ENCODE measurements at regions of chr17 and their contacts with region 1.

Region 1: GRCh38 chr17:72725433-72726068 is 366.9 kb downstream of the SLC39A11 start:
- DNase-seq: peak; percentile 85
- H3K4me3 Mint-ChIP-seq: peak overlapping the region; percentile 26
- H3K27ac Mint-ChIP-seq: peak overlapping the region; percentile 82
- H3K4me1 Mint-ChIP-seq: peaks cover 42% of the 10 kb centered on the region
- H3K27me3 Mint-ChIP-seq: no peaks in the 10 kb centered on the region

Region 2: GRCh38 chr17:72556944-72557826 is 168.4 kb before region 1 on chr17:
- intact Hi-C with region 1: loop called (anchors 1 kb)
- DNase-seq: peak; percentile 90
- H3K4me3 Mint-ChIP-seq: no peak overlapping the region
- H3K27ac Mint-ChIP-seq: no peak overlapping the region
- H3K4me1 Mint-ChIP-seq: no peaks in the 10 kb centered on the region
- H3K27me3 Mint-ChIP-seq: no peaks in the 10 kb centered on the region

Region 3: GRCh38 chr17:72699545-72699944 is 26.0 kb before region 1 on chr17:
- intact Hi-C with region 1: no loop called
- DNase-seq: no peak
- H3K4me3 Mint-ChIP-seq: no peak overlapping the region
- H3K27ac Mint-ChIP-seq: no peak overlapping the region
- H3K4me1 Mint-ChIP-seq: peaks cover 7% of the 10 kb centered on the region
- H3K27me3 Mint-ChIP-seq: no peaks in the 10 kb centered on the region

Region 4: GRCh38 chr17:72754513-72754912 is 29.0 kb after region 1 on chr17:
- intact Hi-C with region 1: no loop called
- DNase-seq: no peak
- H3K4me3 Mint-ChIP-seq: no peak overlapping the region
- H3K27ac Mint-ChIP-seq: no peak overlapping the region
- H3K4me1 Mint-ChIP-seq: peaks cover 3% of the 10 kb centered on the region
- H3K27me3 Mint-ChIP-seq: no peaks in the 10 kb centered on the region

Region 5: GRCh38 chr17:72863526-72864211 is 138.1 kb after region 1 on chr17:
- intact Hi-C with region 1: loop called (anchors 2 kb)
- DNase-seq: peak; percentile 55
- H3K4me3 Mint-ChIP-seq: peak overlapping the region; percentile 16
- H3K27ac Mint-ChIP-seq: peak overlapping the region; percentile 70
- H3K4me1 Mint-ChIP-seq: peaks cover 29% of the 10 kb centered on the region
- H3K27me3 Mint-ChIP-seq: no peaks in the 10 kb centered on the region

Region 6: DNA sequence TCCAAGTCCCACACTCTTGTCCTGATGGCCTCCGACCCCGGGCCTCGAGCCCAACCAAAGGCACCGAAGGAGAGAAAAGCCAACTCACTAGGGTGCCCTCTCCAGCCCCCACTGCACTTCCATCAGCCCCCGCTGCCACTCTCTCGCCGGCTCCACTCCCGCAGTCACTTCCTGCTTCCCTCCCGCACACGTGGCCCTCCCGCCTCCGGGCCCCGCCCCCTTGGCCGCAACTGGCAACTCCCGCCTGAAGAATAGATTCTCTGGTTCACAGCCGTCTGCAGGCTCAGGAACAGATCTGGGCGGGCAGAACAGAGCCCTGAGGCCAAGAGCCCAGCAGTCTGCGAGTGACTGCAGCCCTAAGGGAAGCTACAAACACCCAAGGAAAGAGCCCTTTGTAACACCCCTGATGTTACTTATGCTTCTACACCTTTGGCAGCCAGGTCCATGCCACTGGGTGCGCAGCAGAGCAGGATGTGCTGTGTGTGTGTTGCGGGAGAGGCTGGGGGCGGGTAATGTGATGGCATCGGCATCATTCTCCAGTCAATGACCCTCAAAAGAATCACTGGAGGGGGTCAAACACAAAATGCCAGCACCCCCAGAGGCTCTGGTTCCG is 367.1 kb after region 1 on chr17 and contains the start of gene SLC39A11:
- intact Hi-C with region 1: loop called (anchors 2 kb)
- DNase-seq: peak; percentile 97
- H3K4me3 Mint-ChIP-seq: peak within 1 kb of the TSS; percentile 100
- H3K27ac Mint-ChIP-seq: peak within 1 kb of the TSS; percentile 99
- H3K4me1 Mint-ChIP-seq: peaks cover 20% of the 10 kb centered on the region
- H3K27me3 Mint-ChIP-seq: peaks cover 13% of the 10 kb centered on the region
- total RNA-seq, gene SLC39A11: 24.6 and 26.1 TPM in 2 replicates

Region 7: DNA sequence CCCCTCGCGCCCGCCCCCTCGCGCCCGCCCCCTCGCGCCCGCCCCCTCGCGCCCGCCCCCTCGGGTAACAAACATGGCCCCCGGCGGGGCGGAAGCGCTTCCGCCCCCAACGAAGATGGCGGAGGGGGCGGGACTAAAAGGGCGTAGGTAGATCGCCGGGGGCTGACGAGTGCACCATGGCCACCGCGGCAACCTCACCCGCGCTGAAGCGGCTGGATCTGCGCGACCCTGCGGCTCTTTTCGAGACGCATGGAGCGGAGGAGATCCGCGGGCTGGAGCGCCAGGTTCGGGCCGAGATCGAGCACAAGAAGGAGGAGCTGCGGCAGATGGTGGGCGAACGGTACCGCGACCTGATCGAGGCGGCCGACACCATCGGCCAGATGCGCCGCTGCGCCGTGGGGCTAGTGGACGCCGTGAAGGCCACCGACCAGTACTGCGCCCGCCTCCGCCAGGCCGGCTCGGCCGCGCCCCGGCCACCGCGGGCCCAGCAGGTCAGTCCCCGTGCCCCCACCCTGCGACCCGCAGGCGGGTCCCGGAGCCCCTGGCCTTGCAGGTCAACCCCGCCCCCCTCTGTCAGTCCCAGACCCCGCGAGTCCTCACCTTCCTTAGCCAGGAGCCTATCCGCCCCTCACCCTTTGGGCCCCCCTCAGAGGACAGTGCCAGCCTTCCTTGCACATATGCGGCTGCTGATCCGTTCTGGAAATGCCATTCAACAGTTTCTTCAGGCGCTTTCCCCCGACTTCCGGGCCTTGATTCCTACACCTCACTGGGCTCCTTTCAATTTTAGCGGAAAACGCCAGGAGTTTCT is 467.5 kb after region 1 on chr17 and contains the start of gene COG1:
- intact Hi-C with region 1: loop called (anchors 1 kb)
- DNase-seq: peak; percentile 90
- H3K4me3 Mint-ChIP-seq: peak within 1 kb of the TSS; percentile 93
- H3K27ac Mint-ChIP-seq: peak within 1 kb of the TSS; percentile 97
- H3K4me1 Mint-ChIP-seq: peaks cover 18% of the 10 kb centered on the region
- H3K27me3 Mint-ChIP-seq: no peaks in the 10 kb centered on the region
- total RNA-seq, gene COG1: 30.0 and 32.7 TPM in 2 replicates

Region 8: DNA sequence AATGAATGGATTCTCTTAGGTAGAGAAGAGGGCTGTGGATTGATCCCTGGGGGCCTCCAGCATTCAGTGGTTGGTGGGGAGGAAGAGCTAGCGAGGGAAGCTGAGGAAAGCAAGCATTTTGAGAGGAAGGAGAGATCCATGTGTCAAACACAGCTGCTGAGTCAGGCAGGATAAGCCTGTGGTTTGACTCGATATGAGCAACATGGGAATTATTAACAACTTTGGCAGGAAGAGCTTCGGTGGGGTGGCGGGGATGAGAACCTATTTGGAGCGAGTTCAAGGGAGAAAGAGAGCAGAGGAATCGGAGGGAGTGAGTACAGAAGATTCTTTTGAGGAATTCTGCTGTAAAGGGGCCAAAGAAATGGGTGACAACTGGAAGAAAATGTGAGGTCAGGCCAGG is 645.7 kb after region 1 on chr17:
- intact Hi-C with region 1: loop called (anchors 1 kb)
- DNase-seq: no peak
- H3K4me3 Mint-ChIP-seq: no peak overlapping the region
- H3K27ac Mint-ChIP-seq: no peak overlapping the region
- H3K4me1 Mint-ChIP-seq: no peaks in the 10 kb centered on the region
- H3K27me3 Mint-ChIP-seq: peaks cover 7% of the 10 kb centered on the region

Measured in activated CD4-positive, alpha-beta T cell treated with anti-CD3 and anti-CD28 coated beads, Interleukin-2, amount 10 ng/mL, durations not matched to agents 24 days and 14 days (primary cell).